B cell (primary cell): ENCODE measurements at regions of chr12 and their contacts with region 1.

Region 1: GRCh38 chr12:112906712-112907414 is at the start of gene OAS1:
- DNase-seq: peak; percentile 79
- ATAC-seq: peak; percentile 73
- H3K4me3 ChIP-seq: peak within 1 kb of the TSS; percentile 47 to 90 (median 71)
- H3K4me3 Mint-ChIP-seq: peak within 1 kb of the TSS; percentile 95
- H3K27ac ChIP-seq: peak within 1 kb of the TSS; percentile 79 to 83
- H3K27ac Mint-ChIP-seq: peak within 1 kb of the TSS; percentile 95
- H3K4me1 ChIP-seq: peaks cover 45 to 75% of the 10 kb centered on the region in 2 donors
- H3K4me1 Mint-ChIP-seq: peaks cover 89% of the 10 kb centered on the region
- H3K27me3 ChIP-seq: no peaks in the 10 kb centered on the region
- H3K27me3 Mint-ChIP-seq: no peaks in the 10 kb centered on the region
- CTCF ChIP-seq: no peak
- total RNA-seq, gene OAS1: 45.7 and 48.3 TPM in 2 replicates

Region 2: DNA sequence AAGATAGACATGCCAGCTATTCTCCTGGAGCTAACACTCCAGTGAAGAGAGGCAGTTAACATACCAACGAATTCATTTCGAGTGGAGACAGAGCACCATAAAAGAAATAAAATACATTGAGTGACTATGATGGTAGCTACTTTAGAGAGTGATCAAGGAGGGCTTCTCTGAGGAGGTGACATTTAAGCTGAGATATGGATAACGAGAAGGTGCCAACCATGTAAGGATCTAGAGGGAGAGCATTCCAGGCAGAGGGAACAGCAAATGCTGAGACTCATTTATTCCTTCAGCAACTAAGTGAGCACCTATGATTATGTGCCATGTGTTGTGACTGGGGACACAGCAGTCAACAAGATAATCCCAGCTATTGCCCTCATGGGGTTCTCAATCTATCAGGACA is 28.4 kb before region 1 on chr12:
- CTCF ChIA-PET with region 1: no interaction called
- POLR2A ChIA-PET with region 1: no interaction called
- intact Hi-C with region 1: no loop called
- DNase-seq: no peak
- ATAC-seq: no peak
- H3K4me3 ChIP-seq: no peak overlapping the region
- H3K4me3 Mint-ChIP-seq: no peak overlapping the region
- H3K27ac ChIP-seq: no peak overlapping the region
- H3K27ac Mint-ChIP-seq: no peak overlapping the region
- H3K4me1 ChIP-seq: no peaks in the 10 kb centered on the region
- H3K4me1 Mint-ChIP-seq: no peaks in the 10 kb centered on the region
- H3K27me3 ChIP-seq: peaks cover 0 to 24% (median 16%) of the 10 kb centered on the region in 4 experiments
- H3K27me3 Mint-ChIP-seq: peaks cover 48% of the 10 kb centered on the region
- CTCF ChIP-seq: no peak

Region 3: DNA sequence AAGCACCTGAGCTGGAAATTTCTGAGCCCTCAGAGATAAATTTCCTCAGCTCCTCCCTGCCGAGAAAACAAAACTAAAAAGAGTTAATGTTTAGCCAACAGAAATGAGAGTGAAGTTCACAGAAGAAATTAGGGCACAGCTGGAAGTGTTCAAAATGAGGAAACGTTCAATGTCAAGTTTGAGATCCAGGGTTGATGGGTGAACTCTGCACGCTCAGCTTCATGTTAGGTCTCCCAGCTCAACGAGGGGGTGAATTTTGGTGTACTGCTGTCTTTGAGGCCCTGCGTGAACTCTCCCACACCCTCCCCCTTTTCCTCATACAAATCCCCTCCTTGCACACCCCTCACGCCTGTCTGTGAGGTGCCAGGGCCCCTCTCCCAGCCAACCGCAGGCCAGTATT is 18.1 kb after region 1 on chr12:
- CTCF ChIA-PET with region 1: interaction called, 6 read pairs
- POLR2A ChIA-PET with region 1: interaction called, 4 read pairs
- intact Hi-C with region 1: loop called (anchors 2 kb)
- DNase-seq: peak; percentile 48
- ATAC-seq: no peak
- H3K4me3 ChIP-seq: no peak overlapping the region
- H3K4me3 Mint-ChIP-seq: peak overlapping the region; percentile 61
- H3K27ac ChIP-seq: peak overlapping the region in 1 of 2 donors; percentile 52
- H3K27ac Mint-ChIP-seq: peak overlapping the region; percentile 83
- H3K4me1 ChIP-seq: peaks cover 20 to 36% of the 10 kb centered on the region in 2 donors
- H3K4me1 Mint-ChIP-seq: peaks cover 42% of the 10 kb centered on the region
- H3K27me3 ChIP-seq: no peaks in the 10 kb centered on the region
- H3K27me3 Mint-ChIP-seq: no peaks in the 10 kb centered on the region
- CTCF ChIP-seq: no peak

Region 4: DNA sequence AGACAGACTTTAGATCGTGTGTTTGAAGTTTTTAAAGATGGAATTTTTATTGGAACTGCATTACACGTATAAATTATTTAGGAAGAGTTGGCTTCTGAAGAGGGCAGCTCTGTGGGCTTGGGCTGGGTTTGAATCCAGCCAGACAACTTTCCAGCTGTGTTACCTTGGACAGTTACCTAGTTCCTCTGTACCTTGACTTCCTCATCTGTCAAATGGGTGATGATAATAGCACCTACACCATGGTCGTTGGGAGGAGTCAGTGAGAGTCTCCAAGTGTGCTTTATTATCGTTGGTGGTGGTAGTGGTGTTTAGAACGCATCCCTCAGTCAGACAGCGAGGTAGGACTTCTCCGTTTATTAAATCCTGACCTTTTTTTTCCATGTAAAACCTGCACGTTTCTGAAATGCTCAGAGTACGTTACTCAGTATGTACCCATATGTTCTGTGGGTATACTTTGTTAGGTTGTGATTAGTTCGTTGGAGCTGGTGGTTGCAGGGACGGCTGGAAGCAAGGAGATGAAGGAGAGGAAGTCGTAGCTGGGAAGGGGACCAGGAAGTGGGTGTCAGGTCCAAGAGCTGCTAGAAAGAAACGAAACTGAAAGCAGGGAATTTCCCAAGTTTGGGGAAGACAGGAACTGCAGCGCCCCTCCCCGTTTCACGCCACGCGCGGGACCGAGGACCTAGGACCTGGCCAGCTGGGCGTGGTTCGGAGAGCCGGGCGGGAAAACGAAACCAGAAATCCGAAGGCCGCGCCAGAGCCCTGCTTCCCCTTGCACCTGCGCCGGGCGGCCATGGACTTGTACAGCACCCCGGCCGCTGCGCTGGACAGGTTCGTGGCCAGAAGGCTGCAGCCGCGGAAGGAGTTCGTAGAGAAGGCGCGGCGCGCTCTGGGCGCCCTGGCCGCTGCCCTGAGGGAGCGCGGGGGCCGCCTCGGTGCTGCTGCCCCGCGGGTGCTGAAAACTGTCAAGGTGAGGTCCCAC is 31.2 kb after region 1 on chr12 and contains the start of gene OAS3:
- CTCF ChIA-PET with region 1: interaction called, 5 read pairs
- POLR2A ChIA-PET with region 1: no interaction called
- intact Hi-C with region 1: loop called (anchors 2 kb)
- DNase-seq: peak; percentile 81
- ATAC-seq: peak; percentile 70
- H3K4me3 ChIP-seq: peak within 1 kb of the TSS; percentile 63 to 81 (median 76)
- H3K4me3 Mint-ChIP-seq: peak within 1 kb of the TSS; percentile 89
- H3K27ac ChIP-seq: peak within 1 kb of the TSS; percentile 45 to 59
- H3K27ac Mint-ChIP-seq: peak within 1 kb of the TSS; percentile 83
- H3K4me1 ChIP-seq: peaks cover 25 to 26% of the 10 kb centered on the region in 2 donors
- H3K4me1 Mint-ChIP-seq: peaks cover 28% of the 10 kb centered on the region
- H3K27me3 ChIP-seq: no peaks in the 10 kb centered on the region
- H3K27me3 Mint-ChIP-seq: no peaks in the 10 kb centered on the region
- CTCF ChIP-seq: no peak
- total RNA-seq, gene OAS3: 24.9 and 25.5 TPM in 2 replicates

Region 5: DNA sequence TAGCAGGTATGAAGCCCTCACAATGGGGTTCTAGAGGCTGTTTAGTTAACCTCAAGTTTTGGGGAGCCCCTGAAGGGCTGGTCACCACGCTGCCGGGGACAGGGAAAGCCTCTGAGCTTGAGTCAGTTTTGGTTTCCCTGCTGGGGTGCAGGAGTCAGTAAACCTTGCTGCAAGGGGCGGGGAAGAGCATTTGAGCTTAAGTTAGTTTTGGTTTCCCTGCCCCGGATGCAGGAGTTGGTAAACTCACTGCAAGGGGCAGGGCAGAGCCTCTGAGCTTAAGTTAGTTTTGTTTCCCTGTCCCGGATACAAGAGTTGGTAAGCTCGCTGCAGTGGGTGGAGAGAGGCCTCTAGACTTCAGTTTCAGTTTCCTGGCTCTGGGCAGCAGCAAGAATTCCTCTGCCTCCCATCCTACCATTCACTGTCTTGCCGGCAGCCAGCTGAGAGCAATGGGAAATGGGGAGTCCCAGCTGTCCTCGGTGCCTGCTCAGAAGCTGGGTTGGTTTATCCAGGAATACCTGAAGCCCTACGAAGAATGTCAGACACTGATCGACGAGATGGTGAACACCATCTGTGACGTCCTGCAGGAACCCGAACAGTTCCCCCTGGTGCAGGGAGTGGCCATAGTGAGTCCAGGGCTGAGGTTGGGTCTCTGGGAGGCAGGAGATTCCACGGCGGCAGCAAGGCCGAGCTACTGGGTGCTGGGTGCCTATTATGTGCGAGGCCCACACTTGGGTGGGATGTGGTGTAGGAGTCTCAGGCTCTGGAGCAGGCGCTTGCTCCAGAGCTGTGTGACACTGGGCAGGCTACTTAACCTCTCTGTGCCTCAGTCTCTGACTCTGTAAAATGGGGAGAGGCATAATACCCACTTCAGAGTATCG is 71.5 kb after region 1 on chr12 and contains the start of gene OAS2:
- CTCF ChIA-PET with region 1: interaction called, 30 read pairs
- POLR2A ChIA-PET with region 1: interaction called, 4 read pairs
- intact Hi-C with region 1: loop called (anchors 1 kb)
- DNase-seq: peak; percentile 92
- ATAC-seq: peak; percentile 94
- H3K4me3 ChIP-seq: peak within 1 kb of the TSS; percentile 70 to 94 (median 78)
- H3K4me3 Mint-ChIP-seq: peak within 1 kb of the TSS; percentile 98
- H3K27ac ChIP-seq: peak within 1 kb of the TSS; percentile 90 to 94
- H3K27ac Mint-ChIP-seq: peak within 1 kb of the TSS; percentile 98
- H3K4me1 ChIP-seq: peaks cover 39 to 40% of the 10 kb centered on the region in 2 donors
- H3K4me1 Mint-ChIP-seq: peaks cover 59% of the 10 kb centered on the region
- H3K27me3 ChIP-seq: no peaks in the 10 kb centered on the region
- H3K27me3 Mint-ChIP-seq: no peaks in the 10 kb centered on the region
- CTCF ChIP-seq: no peak
- total RNA-seq, gene OAS2: 57.4 and 59.3 TPM in 2 replicates

Region 6: DNA sequence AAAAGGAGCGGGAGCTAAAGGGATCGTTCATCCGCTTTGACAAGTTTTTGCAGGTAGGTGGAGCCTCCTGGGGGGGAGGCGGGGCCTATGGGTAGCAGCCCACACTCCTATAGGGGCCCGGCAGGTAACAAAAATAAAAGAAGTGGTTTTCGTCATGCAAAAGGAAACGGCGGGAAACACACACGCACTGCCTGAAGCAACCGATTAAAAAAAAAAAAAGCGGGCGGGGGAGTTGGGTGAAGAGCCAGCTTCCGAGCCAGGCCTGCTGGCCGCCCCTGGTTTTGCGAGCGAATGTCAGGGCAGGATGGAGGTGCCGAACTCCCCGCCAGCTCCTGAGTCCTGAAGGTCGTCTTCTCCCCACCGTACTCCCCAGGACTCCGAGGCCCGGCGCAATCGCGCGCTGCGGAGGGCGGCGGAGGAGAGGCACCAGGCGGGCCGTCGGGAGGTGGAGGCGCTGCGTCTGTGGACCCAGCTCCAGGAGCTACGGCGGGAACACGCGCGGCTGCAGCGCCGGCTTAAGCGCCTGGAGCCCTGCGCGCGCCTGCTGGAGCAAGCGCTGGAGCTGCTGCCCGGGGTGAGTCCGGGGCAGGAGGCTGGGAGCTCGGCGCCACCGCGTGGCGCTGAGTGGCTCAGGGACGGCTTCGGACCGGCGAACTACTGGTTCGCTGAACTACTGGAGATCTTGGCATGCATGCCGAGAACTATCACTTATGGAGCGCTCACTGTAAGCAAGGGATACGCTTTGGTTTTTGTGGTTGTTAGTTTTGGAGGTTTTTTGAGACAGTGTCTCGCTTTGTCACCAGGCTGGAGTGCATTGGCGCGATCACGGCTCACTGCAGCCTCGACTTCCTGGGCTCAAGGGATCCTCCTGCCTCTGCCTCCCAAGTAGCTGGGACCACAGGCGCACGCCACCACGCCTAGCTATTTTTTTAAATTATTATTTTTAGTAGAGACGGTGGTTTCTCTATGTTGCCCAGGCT is 246.3 kb after region 1 on chr12:
- CTCF ChIA-PET with region 1: no interaction called
- POLR2A ChIA-PET with region 1: no interaction called
- intact Hi-C with region 1: loop called (anchors 10 kb)
- DNase-seq: peak; percentile 72
- ATAC-seq: peak; percentile 73
- H3K4me3 ChIP-seq: peak overlapping the region; percentile 34 to 61 (median 56)
- H3K4me3 Mint-ChIP-seq: peak overlapping the region; percentile 88
- H3K27ac ChIP-seq: no peak overlapping the region
- H3K27ac Mint-ChIP-seq: no peak overlapping the region
- H3K4me1 ChIP-seq: peaks cover 15 to 32% of the 10 kb centered on the region in 2 donors
- H3K4me1 Mint-ChIP-seq: peaks cover 26% of the 10 kb centered on the region
- H3K27me3 ChIP-seq: peaks cover 0 to 25% (median 8%) of the 10 kb centered on the region in 4 experiments
- H3K27me3 Mint-ChIP-seq: peaks cover 6% of the 10 kb centered on the region
- CTCF ChIP-seq: peak; percentile 23

Region 7: DNA sequence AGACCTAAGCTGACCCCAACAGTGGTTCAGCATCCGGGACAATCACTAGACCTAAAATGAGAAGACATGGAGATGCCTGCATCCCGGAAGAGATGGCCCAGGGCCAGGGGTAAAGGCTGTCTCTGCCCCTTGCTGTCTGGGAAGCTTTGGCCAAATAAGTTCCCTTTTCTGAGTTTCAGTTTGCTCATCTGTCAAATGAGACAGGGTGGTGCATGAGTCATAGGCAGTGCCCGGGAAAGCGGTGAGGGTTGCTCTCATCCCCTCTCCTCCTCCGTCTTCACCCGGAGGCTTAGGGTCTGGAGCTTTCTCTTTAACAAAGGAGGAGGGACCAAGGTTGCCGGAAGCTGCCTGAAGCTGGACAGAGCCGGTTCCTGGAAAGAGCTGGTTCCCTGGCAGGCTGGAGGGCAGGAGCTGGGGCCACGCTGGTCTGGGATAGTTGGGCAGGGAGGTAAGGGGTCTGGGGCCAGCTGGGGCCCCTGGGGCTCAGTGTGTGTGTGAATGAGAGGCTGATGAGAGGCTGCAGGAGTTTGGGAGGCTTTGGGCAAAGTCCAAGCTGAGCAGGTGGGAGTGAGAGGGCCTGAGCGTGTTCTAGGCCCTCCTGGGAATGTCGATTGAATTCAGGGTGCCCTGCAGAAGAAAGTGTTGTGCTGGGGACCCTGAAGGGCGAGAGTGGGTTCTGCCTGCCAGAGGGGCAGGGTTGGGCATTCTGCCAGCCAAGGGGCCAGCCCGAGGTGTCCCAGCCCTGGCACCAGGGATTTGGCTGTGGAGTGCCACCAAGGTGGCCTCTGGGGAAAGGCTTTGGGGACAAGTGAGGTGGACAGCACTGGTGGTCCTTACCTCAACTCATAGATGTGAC is 515.4 kb after region 1 on chr12 and contains the start of gene SDSL:
- CTCF ChIA-PET with region 1: no interaction called
- POLR2A ChIA-PET with region 1: no interaction called
- intact Hi-C with region 1: no loop called
- DNase-seq: peak; percentile 74
- ATAC-seq: peak; percentile 93
- H3K4me3 ChIP-seq: peak within 1 kb of the TSS in 1 of 5 experiments; percentile 8
- H3K4me3 Mint-ChIP-seq: peak within 1 kb of the TSS; percentile 79
- H3K27ac ChIP-seq: no peak within 1 kb of the TSS
- H3K27ac Mint-ChIP-seq: peak within 1 kb of the TSS; percentile 53
- H3K4me1 ChIP-seq: peaks cover 10 to 18% of the 10 kb centered on the region in 2 donors
- H3K4me1 Mint-ChIP-seq: peaks cover 20% of the 10 kb centered on the region
- H3K27me3 ChIP-seq: peaks cover 0 to 7% (median 2%) of the 10 kb centered on the region in 4 experiments
- H3K27me3 Mint-ChIP-seq: peaks cover 14% of the 10 kb centered on the region
- CTCF ChIP-seq: no peak
- total RNA-seq, gene SDSL: 0.64 and 1.1 TPM in 2 replicates